ENCODE measurements at regions of chr5 and their contacts with region 1.

Region 1: DNA sequence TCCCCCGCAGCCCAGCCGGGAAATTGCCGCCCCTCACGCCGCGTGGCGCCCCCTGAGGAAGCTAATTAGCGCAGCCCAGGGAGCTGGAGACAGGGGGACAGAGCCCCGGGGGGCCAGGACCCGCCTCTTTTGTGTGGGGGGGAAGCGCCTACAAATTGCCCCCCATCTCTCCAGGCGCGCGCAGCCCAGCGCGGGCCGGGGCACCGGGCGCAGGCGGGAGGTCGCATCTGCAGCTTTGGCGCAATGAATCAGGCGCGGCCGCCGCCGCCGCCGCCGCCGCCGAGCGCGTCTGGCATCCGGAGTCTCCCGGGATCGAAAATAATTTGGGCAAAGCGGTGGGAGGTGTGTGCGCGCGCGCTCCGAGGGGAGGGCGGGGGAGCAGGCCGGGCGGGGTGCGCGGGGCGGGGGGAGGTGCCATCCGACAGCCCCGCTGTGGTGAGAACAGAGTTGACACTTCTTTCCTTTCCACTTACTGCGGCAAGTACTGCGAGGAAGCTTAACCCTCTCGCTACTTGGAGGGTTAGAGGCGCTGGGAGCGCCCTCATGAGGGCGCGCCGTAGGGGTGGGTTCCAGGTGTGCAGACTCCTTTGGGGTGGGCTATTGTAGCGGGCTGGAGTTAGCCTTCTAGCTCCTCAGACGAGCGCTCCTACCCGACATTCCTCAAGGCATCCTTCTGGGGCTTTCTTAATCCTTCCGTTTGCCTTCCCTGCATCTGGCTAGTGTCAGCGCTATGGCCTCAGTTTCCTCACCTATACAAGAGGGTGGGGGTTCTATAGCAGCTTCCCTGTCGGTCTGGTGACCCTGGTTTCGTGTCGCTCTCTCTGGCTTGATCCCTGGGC is 63.1 kb downstream of the CXXC5 start:
- DNase-seq: peak; percentile 47 to 65
- ATAC-seq: peak; percentile 14 to 55 (median 40)
- H3K4me3 ChIP-seq: peak overlapping the region; percentile 68
- H3K27ac ChIP-seq: no peak overlapping the region
- H3K4me1 ChIP-seq: peaks cover 18% of the 10 kb centered on the region
- H3K27me3 ChIP-seq: peaks cover 0 to 15% (median 2%) of the 10 kb centered on the region in 3 donors
- CTCF ChIP-seq: peak; percentile 4

Region 2: GRCh38 chr5:139745800-139746690 is 34.8 kb after region 1 on chr5:
- intact Hi-C with region 1: loop called in 1 of 2 experiments (anchors 5 kb)
- DNase-seq: peak; percentile 69 to 81
- ATAC-seq: peak; percentile 74 to 91 (median 81)
- H3K4me3 ChIP-seq: peak overlapping the region; percentile 69
- H3K27ac ChIP-seq: no peak overlapping the region
- H3K4me1 ChIP-seq: peaks cover 27% of the 10 kb centered on the region
- H3K27me3 ChIP-seq: peaks cover 0 to 21% (median 11%) of the 10 kb centered on the region in 3 donors
- CTCF ChIP-seq: no peak

Region 3: DNA sequence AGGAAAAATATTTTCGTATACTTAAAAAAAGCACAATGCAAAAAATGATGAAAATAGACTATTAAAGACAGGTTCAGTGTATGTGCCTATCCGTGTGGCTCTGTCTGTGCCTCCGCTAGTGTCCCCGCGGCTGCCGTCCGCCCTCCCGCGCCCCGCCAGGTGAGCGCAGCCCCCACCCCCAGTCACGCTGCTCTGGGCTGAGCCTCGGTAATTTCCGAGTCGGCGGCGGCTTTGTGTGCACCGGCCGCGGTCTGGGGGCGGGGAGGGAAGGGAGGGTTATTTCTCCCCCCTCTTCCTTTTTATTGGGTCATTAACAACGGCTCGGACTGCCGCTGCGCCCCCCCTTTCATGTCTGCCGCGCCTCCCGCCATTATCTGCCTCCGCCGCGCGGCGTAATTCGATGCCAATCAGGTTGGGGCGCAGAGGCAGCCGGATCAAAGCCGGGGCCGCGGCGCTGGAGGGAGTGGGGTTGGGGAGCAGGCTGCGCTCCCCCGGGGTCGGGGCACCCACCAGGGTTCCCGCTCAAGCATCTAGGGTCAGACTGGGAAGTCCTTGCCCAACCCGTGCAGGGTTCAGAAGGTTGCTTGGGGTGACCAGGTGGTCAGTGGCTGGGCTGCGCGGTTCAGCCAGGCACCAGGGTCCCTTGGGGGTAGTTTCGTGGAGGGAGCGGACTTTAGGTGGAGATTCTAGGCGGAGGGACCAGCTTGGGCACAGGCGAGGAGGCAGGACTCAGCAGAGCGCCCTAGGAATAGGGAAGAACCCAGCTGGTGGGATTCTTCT is 44.8 kb after region 1 on chr5:
- intact Hi-C with region 1: loop called in 1 of 2 experiments (anchors 5 kb)
- DNase-seq: no peak
- ATAC-seq: peak in 2 of 4 donors; percentile 8 to 41
- H3K4me3 ChIP-seq: peak overlapping the region; percentile 48
- H3K27ac ChIP-seq: no peak overlapping the region
- H3K4me1 ChIP-seq: peaks cover 6% of the 10 kb centered on the region
- H3K27me3 ChIP-seq: peaks cover 0 to 39% (median 16%) of the 10 kb centered on the region in 3 donors
- CTCF ChIP-seq: no peak

Region 4: DNA sequence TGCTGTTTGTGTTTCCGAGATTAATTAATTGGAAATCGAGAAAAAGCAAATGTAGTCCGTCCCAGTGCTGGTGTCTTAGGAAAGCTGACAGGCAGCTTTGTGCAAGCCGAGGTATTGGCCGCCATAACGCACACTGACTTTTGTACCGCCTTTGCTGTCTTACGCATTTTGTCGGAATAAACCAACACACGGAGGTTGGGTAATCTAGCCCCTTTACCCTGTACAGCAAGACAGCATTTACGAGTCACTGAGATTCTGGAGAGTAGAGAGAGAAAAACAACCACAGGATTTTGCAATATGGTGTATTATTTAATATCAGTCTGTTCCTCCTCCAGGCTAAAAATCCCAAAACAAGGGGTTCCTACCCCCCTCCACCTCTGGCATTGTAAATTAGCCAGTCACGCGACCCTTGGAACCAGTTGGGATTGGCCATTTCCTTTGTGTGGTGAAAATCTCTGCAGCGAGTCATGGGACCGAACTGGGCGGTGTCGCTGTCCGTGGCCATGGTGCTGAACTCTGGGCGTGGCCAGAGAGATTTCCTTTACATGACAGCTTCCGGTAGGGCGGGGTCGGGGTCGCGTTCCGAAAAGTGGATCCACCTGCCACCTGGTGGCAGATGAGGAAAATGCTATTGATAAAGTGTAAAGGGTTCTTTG is 1329.6 kb after region 1 on chr5:
- intact Hi-C with region 1: no loop called
- DNase-seq: peak; percentile 87 to 91
- ATAC-seq: peak; percentile 89 to 95 (median 92)
- H3K4me3 ChIP-seq: peak overlapping the region; percentile 54
- H3K27ac ChIP-seq: no peak overlapping the region
- H3K4me1 ChIP-seq: no peaks in the 10 kb centered on the region
- H3K27me3 ChIP-seq: no peaks in the 10 kb centered on the region
- CTCF ChIP-seq: peak; percentile 51